ENCODE measurements at regions of chr1 and their contacts with region 1.

Region 1: DNA sequence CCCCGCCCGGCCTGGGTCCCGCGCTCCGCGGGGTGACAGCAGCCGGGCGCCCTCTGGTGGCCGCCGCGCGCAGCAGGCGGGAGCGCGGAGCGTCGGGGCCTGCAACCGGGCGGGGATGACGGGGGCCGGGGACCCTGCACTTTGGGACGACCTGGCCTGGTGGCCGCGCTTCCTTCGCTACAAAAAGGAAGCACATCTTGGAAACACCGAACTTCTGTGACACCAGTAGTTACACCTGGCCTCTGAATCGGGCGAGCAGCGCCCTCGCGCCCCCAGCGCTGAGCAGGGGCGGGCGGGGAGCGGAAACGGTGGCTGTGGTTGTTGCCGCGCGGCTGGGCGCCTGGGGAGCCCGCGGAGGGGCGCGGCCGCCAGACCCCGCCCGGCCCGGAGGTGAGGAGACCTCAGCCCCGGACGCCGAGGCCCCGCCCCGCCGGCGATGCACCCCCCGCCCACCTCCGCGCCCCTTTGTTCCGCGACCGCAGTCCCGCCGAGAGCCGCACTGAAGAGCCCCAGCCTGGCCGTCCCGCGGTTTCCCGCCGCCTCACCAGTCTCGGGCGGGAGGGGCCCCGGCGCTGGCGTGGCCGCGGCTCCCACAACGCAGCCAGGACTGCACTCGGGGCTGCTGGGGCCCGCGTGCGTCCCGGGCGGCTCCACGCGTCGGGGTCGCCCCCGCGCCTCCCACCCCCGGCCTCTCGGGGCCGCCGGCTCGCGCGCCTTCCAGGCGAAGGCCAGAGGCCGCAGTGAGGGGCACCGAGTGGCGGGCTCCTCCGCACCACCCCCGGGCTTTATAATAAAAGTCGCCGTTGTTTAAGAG is 59.3 kb downstream of the H3-3A start:
- DNase-seq: peak; percentile 85
- ATAC-seq: peak; percentile 90

Region 2: DNA sequence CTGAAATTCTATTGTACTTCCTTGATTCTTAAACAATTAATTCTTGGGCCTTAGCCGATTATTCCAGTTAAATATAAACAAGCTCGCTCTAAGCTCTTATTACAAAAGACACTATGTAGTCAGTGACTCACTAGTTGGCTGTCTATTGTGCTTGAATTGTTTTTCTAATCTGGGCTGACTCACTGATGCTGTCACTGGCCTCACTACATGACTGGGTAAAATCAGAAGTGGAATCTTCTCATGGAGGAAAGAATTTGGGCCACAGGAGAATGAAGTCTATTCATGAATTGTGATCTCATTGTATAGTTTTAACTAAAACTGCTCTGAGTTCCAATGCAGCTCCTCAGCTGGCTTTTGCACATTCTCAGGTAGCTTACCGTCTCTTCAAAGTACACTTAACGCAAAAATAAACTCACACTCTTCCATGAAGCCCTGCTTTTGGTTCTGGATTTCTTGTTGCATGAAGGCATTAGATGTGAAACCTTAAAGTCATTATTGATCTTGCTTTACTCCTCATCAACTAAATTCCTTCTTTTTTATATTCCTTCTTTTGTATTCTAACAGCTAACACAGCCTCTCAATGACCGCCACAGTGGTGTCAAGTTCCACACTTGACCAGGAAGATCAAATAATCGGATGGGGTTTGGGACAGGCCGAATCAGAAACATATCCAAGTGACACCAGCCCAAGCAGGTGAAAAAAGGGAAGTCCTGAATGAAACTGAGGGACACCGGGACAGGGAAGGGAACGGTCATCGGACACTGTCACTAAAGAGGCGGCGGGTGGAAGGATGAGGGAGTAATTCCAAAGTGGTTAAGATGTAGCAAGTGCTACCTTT is 613.0 kb before region 1 on chr1:
- intact Hi-C with region 1: no loop called
- DNase-seq: no peak
- ATAC-seq: peak; percentile 98

Region 3: GRCh38 chr1:226064816-226065248 is 57.0 kb before region 1 on chr1:
- intact Hi-C with region 1: loop called (anchors 5 kb)
- DNase-seq: no peak
- ATAC-seq: no peak

Region 4: DNA sequence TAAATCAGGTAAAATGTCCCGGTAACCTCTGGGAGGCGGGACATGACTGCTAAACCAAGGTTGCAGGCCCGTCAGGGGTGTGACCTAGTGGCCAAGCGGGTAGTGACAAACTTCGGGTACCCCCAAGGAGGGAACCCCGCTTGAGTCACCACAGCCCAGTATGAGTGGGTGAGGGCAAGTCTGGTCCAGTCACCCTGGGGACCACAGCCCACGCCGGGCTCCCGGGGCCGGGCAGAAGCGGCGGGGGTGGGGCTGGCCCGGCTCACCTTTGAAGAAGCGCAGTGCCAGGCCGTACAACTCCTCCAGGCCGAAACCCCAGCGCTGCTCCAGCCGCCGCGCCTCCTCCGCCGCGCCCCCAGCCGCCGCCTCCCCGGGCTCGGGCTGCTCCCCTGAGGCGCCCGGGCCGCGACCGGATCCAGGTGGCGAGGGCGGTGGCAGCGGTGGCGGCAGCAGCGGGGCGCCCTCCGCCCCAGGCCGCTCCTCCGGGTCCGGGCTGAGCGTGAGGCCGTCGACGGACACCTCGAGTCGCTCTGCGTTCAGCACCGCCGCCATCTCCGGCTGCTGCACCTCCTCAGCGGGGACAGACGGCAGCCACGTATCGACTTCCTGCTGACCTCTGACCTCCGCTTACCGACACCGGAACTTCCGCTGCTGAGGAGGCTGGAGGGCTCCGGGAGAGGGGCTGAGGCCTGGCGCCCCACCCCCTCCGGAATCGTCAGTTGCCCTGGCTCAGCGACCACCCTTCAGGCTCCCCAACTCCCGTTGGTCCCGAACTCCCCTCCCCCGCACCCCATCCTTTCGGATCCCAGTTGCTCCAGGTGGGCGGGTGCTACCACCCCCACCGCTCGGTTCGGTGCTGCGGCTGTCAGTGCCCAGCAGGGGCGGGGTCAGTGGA is 64.6 kb after region 1 on chr1 and contains the start of gene ACBD3:
- intact Hi-C with region 1: loop called (anchors 10 kb)
- DNase-seq: peak; percentile 89
- ATAC-seq: peak; percentile 98
- total RNA-seq, gene ACBD3: 30.1 TPM